ENCODE measurements at regions of chr1 and their contacts with region 1.

Region 1: DNA sequence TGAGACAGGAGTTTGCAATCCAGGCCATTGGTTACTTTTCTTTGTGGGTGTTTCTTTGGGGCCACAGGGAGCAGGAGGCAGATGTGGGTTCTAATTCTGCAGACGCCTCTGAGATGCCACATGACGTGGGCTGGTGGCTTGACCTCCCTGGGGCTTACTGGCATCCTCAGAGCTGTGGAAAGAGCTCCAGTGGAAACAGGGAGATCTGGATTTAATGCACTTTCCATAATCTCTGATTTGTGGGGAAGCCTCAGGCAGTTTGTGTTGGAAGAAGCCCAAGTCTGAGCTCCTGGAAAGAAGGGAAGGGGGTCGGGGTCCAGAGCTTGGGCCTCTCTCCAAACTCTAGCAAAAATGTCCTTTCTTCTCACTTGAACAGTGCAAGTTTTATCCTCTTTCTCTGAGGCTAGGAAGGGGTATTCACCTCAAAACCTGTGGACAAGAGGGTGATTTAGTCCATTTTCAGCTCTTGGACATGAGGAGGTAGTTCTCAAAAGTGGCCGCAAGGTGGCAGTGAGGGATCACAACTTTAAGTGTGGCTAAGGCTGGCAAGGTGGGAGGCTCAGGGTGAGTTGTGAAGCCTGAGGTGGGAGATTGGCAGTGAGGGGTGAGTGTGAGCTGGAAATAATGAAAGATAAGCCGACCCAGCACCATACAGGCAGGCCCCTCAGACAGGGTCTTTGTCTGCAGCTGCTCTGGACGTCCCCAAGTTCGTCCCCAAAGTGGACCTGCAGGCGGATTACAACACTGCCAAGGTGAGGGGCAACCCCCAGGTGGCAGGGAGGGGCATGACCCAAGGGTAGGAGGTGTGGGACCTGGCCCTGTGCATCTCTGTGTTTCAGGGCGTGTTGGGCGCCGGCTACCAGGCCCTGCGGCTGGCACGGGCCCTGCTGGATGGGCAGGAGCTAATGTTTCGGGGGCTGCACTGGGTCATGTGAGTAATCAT is 9.2 kb downstream of the IKBKE start:
- DNase-seq: peak; percentile 60 to 81
- H3K4me3 ChIP-seq: no peak overlapping the region
- H3K27ac ChIP-seq: no peak overlapping the region
- H3K4me1 ChIP-seq: peaks cover 0 to 3% (median 0%) of the 10 kb centered on the region in 4 experiments; a peak in 1 of 7 replicates
- H3K27me3 ChIP-seq: no peaks in the 10 kb centered on the region
- CTCF ChIP-seq: peak; percentile 65 to 87 (median 82)
- EP300 ChIP-seq: no peak
- POLR2A ChIP-seq: no peak
- RAD21 ChIP-seq: peak; percentile 81 to 82

Region 2: DNA sequence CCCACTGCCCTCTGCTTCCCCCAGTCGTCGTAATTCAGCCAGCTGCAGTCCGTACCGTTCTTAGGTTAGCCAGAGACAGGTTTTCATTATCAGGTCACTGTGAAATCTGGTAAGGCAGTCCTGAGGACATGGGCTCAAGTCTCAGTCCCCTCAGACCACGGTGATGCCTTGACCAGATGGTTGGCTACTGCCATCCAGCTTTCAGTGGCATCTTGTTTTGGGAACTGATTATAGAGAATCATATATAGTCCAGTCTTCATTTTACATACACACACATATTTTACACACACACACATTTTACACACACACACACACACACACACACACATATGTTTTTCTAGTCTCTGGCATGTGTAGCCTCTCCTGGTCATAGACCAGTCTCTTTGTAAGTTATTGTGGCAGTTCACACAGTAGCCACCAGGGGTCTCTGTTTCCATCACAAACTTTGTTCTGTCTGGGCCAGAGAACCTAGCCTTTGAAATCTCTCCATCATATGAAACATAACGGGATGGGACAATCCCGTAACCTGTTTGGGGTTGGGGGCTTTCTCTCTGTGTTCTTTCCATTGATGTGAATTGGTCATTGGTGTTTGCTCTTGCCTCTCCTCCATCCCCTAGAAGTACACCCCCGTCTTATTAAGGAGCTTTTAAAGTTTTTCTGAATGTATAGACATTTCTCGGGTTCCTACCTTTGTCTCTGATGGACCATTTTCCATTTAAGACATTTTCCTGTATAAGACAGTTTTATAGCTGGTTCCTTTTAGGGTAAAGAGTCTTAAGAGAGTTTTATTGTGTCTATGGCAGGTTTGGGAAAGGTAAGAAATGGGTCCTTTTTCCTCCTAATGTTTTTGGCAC is 17.6 kb before region 1 on chr1:
- CTCF ChIA-PET with region 1: interaction called, 76 read pairs
- POLR2A ChIA-PET with region 1: no interaction called
- DNase-seq: peak in 1 of 2 experiments; percentile 82
- H3K4me3 ChIP-seq: no peak overlapping the region
- H3K27ac ChIP-seq: no peak overlapping the region
- H3K4me1 ChIP-seq: no peaks in the 10 kb centered on the region
- H3K27me3 ChIP-seq: no peaks in the 10 kb centered on the region; a peak in 1 of 7 replicates
- CTCF ChIP-seq: peak in 2 of 3 experiments; percentile 62 to 76; a peak in 2 of 4 replicates
- EP300 ChIP-seq: no peak
- POLR2A ChIP-seq: no peak
- RAD21 ChIP-seq: peak; percentile 63 to 73

Region 3: GRCh38 chr1:206496131-206496793 is 16.8 kb after region 1 on chr1:
- CTCF ChIA-PET with region 1: interaction called, 81 read pairs
- POLR2A ChIA-PET with region 1: interaction called, 3 read pairs
- DNase-seq: no peak
- H3K4me3 ChIP-seq: no peak overlapping the region
- H3K27ac ChIP-seq: no peak overlapping the region
- H3K4me1 ChIP-seq: 0 out of 7 replicates have a peak, but pooled peaks cover 0 to 3% (median 0%) of the 10 kb centered on the region in 4 experiments
- H3K27me3 ChIP-seq: no peaks in the 10 kb centered on the region
- CTCF ChIP-seq: no peak
- EP300 ChIP-seq: no peak
- POLR2A ChIP-seq: no peak
- RAD21 ChIP-seq: no peak

Region 4: GRCh38 chr1:206521143-206521542 is 41.7 kb after region 1 on chr1:
- CTCF ChIA-PET with region 1: interaction called, 10 read pairs
- POLR2A ChIA-PET with region 1: no interaction called
- DNase-seq: no peak
- H3K4me3 ChIP-seq: no peak overlapping the region
- H3K27ac ChIP-seq: no peak overlapping the region
- H3K4me1 ChIP-seq: no peaks in the 10 kb centered on the region
- H3K27me3 ChIP-seq: no peaks in the 10 kb centered on the region
- CTCF ChIP-seq: no peak
- EP300 ChIP-seq: no peak
- POLR2A ChIP-seq: no peak
- RAD21 ChIP-seq: no peak

Region 5: DNA sequence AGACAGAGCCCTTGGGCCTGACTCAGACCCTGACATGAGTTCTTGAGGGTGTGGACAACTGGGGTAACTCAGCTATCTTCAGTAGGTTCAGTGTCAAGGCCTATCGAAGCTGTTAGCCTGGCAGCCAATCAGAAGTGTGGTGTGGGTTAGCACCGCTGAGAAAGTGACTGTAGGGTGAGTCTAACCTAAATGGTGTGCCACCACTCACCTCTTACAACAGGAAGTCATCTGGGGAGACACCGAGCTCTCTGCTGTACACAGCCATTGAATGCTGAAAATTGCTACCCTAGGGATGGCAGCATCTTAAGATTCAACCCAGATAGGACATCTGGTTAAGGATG is 72.5 kb after region 1 on chr1:
- CTCF ChIA-PET with region 1: interaction called, 23 read pairs
- POLR2A ChIA-PET with region 1: no interaction called
- DNase-seq: no peak
- H3K4me3 ChIP-seq: no peak overlapping the region
- H3K27ac ChIP-seq: no peak overlapping the region
- H3K4me1 ChIP-seq: peaks cover 0 to 7% (median 2%) of the 10 kb centered on the region in 4 experiments; a peak in 3 of 7 replicates
- H3K27me3 ChIP-seq: peaks cover 0 to 8% (median 5%) of the 10 kb centered on the region in 4 experiments; a peak in 4 of 7 replicates
- CTCF ChIP-seq: no peak
- EP300 ChIP-seq: no peak
- POLR2A ChIP-seq: no peak
- RAD21 ChIP-seq: no peak

Region 6: GRCh38 chr1:206556750-206557635 is 77.5 kb after region 1 on chr1:
- CTCF ChIA-PET with region 1: interaction called, 23 read pairs
- POLR2A ChIA-PET with region 1: no interaction called
- DNase-seq: peak in 1 of 2 experiments; percentile 77
- H3K4me3 ChIP-seq: peak overlapping the region; percentile 43 to 65 (median 48)
- H3K27ac ChIP-seq: no peak overlapping the region
- H3K4me1 ChIP-seq: peaks cover 4 to 7% (median 5%) of the 10 kb centered on the region in 4 experiments; a peak in 6 of 7 replicates
- H3K27me3 ChIP-seq: peaks cover 5 to 29% (median 19%) of the 10 kb centered on the region in 4 experiments
- CTCF ChIP-seq: no peak
- EP300 ChIP-seq: no peak
- POLR2A ChIP-seq: no peak
- RAD21 ChIP-seq: no peak

Region 7: DNA sequence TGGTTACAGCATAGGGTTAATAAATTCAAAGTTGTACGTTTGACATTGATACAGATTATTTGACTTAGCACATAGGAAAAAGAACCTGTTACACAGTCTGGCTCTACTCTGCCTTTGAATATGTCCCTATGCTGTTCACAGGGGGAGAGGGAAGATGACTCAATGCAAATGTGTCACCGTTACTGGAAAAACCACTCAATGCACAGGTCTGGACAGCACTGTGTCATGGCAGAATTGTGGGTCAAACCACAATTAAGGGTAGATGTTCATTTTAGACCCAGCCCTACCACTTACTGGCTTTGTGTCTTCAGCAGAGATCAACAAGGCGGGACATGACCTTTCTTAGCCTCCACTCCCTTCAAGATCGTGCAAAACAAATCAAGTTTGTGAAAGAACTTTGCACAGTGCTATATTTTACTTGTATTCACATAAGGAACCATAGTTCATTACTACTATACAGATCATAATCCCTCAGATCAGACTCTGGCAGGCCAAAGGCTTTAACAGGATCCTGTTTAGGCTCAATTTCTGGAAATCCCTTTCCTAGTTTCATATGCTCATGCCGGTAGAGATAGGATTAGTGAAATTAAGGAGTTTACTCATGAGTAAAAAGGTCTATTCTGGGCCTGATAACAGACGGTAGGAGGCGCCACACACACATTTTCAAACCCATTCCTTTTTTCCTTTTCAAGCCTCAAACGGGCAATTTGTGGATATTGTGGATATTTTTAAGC is 110.7 kb after region 1 on chr1:
- CTCF ChIA-PET with region 1: interaction called, 71 read pairs
- POLR2A ChIA-PET with region 1: interaction called, 3 read pairs
- DNase-seq: no peak
- H3K4me3 ChIP-seq: no peak overlapping the region
- H3K27ac ChIP-seq: no peak overlapping the region
- H3K4me1 ChIP-seq: no peaks in the 10 kb centered on the region
- H3K27me3 ChIP-seq: no peaks in the 10 kb centered on the region
- CTCF ChIP-seq: peak in 2 of 3 experiments; percentile 49 to 69; a peak in 3 of 4 replicates
- EP300 ChIP-seq: no peak
- POLR2A ChIP-seq: no peak
- RAD21 ChIP-seq: peak; percentile 40 to 54; a peak in 3 of 4 replicates